Activated CD4-positive, alpha-beta T cell treated with anti-CD3 and anti-CD28 coated beads, Interleukin-2, amount 10 ng/mL, durations not matched to agents 24 days and 14 days (primary cell): ENCODE measurements at regions of chr4 and their contacts with region 1.

Region 1: GRCh38 chr4:108834835-108835384 is 72.1 kb upstream of the ETNPPL start:
- DNase-seq: no peak
- H3K4me3 Mint-ChIP-seq: no peak overlapping the region
- H3K27ac Mint-ChIP-seq: no peak overlapping the region
- H3K4me1 Mint-ChIP-seq: peaks cover 4% of the 10 kb centered on the region
- H3K27me3 Mint-ChIP-seq: peaks cover 17% of the 10 kb centered on the region

Region 2: DNA sequence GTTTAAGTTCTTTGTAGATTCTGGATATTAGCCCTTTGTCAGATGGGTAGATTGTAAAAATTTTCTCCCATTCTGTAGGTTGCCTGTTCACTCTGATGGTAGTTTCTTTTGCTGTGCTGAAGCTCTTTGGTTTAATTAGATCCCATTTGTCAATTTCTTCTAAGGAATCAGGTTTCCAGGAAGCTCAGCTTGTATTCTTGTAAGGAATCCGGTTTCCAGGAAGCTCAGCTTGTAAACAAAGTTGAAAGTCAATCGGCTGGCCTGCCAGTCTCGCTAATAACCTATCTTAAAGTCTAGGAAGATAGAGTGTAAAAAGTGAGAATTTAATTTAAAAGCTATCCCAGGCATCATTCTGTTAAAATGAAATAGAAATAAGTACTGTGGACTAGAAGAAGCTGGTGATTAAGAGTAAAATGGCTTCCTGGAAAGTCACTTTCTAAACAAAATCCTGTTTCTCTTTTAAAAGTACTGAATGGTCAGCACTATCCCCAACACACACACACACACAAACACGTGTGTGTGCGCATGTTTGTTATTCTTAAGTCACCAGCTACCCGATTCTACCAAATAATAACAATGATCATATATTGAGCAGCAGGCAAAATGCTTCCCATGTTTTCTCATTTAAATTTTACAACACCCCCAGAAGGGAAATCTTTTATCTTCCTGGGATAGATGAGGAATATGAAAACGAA is 1286.6 kb before region 1 on chr4:
- intact Hi-C with region 1: no loop called
- DNase-seq: no peak
- H3K4me3 Mint-ChIP-seq: no peak overlapping the region
- H3K27ac Mint-ChIP-seq: no peak overlapping the region
- H3K4me1 Mint-ChIP-seq: no peaks in the 10 kb centered on the region
- H3K27me3 Mint-ChIP-seq: peaks cover 2% of the 10 kb centered on the region

Region 3: GRCh38 chr4:109294006-109294405 is 459.1 kb after region 1 on chr4:
- intact Hi-C with region 1: loop called (anchors 5 kb)
- DNase-seq: peak; percentile 70
- H3K4me3 Mint-ChIP-seq: no peak overlapping the region
- H3K27ac Mint-ChIP-seq: no peak overlapping the region
- H3K4me1 Mint-ChIP-seq: no peaks in the 10 kb centered on the region
- H3K27me3 Mint-ChIP-seq: peaks cover 23% of the 10 kb centered on the region

Region 4: GRCh38 chr4:109406338-109406931 is 571.5 kb after region 1 on chr4:
- intact Hi-C with region 1: loop called (anchors 1 kb)
- DNase-seq: peak; percentile 84
- H3K4me3 Mint-ChIP-seq: no peak overlapping the region
- H3K27ac Mint-ChIP-seq: no peak overlapping the region
- H3K4me1 Mint-ChIP-seq: peaks cover 2% of the 10 kb centered on the region
- H3K27me3 Mint-ChIP-seq: peaks cover 20% of the 10 kb centered on the region